K562 (cell line): ENCODE measurements at regions of chr18 and their contacts with region 1.

Region 1: GRCh38 chr18:25561918-25562317 is 210.0 kb upstream of the ZNF521 start:
- DNase-seq: peak; percentile 26 to 37 (median 36)
- ATAC-seq: peak; percentile 68
- H3K4me3 ChIP-seq: no peak overlapping the region
- H3K27ac ChIP-seq: no peak overlapping the region
- H3K4me1 ChIP-seq: no peaks in the 10 kb centered on the region
- H3K27me3 ChIP-seq: no peaks in the 10 kb centered on the region
- CTCF ChIP-seq: peak; percentile 22 to 39 (median 33); a peak in 3 of 6 replicates
- EP300 ChIP-seq: no peak
- POLR2A ChIP-seq: no peak
- RAD21 ChIP-seq: no peak

Region 2: DNA sequence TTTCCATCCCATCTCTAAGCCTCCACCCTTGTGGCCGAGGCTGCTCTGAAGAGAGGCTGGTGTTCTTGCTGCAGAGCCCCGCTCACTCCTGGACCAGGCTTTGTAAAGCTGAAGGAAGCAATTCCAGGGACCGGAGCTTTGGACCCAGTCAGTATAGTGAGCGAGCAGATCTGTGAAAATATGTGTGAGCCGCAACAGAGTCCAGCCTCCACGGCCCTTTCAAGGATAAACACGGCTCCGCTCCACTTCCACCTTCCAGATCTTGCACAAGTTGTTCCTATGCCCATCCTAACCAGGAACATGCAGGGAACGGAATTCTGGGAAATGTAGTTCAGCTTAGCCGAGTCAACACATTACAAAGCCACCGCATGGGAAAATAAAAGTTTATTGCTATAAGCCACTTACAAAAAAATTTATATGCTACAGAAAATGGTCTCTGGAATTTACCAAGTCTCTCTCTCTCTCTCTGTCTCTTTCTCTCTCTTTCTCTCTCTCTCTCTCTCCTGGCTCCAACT is 58.3 kb before region 1 on chr18:
- CTCF ChIA-PET with region 1: no interaction called
- POLR2A ChIA-PET with region 1: no interaction called
- in situ Hi-C with region 1: no loop called
- intact Hi-C with region 1: loop called (anchors 10 kb)
- DNase-seq: peak in 1 of 4 experiments; percentile 33
- ATAC-seq: peak; percentile 71
- H3K4me3 ChIP-seq: peak overlapping the region; percentile 3; the same call in 1 of the 2 replicates
- H3K27ac ChIP-seq: no peak overlapping the region
- H3K4me1 ChIP-seq: no peaks in the 10 kb centered on the region
- H3K27me3 ChIP-seq: no peaks in the 10 kb centered on the region
- CTCF ChIP-seq: no peak
- EP300 ChIP-seq: no peak
- POLR2A ChIP-seq: no peak
- RAD21 ChIP-seq: no peak

Region 3: DNA sequence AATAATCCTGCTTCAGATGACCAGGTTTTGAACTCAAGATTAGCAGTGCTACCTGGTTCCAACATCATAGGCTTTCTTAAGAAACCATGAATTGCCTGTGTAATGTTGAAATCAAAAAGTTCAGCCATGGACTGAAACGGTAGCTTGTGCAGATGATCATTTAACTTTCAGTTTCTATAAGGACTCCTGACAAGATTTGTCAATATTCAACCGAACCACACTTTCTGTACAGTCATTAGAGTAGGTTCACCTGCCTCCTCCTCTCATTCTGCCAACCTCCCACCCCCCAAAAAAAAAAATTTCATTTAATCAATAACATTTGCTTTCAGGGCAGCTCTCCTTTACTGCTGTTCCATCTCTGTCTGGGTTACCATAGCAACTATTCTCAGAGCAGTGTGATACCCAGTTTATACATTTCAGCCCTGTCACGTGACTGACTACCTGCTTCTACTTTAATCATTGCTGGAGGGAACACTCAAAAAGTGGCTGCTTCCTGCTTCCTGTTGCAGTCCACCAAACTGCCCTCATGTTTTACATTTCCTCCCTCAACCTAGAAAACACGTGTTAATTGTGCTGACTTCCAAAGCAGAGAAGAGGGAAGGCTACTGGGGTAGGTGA is 253.0 kb after region 1 on chr18:
- CTCF ChIA-PET with region 1: no interaction called
- POLR2A ChIA-PET with region 1: no interaction called
- in situ Hi-C with region 1: no loop called
- intact Hi-C with region 1: no loop called
- DNase-seq: no peak
- ATAC-seq: no peak
- H3K4me3 ChIP-seq: no peak overlapping the region
- H3K27ac ChIP-seq: no peak overlapping the region
- H3K4me1 ChIP-seq: no peaks in the 10 kb centered on the region
- H3K27me3 ChIP-seq: no peaks in the 10 kb centered on the region
- CTCF ChIP-seq: no peak
- EP300 ChIP-seq: no peak
- POLR2A ChIP-seq: no peak
- RAD21 ChIP-seq: no peak